Gastrocnemius medialis (tissue), 4 donors: ENCODE measurements at regions of chr9 and their contacts with region 1.

Region 1: GRCh38 chr9:81394881-81395675 is 294.3 kb downstream of the TLE1 start:
- DNase-seq: no peak
- ATAC-seq: peak in 1 of 2 donors; percentile 46
- H3K4me3 ChIP-seq: no peak overlapping the region
- H3K27ac ChIP-seq: peak overlapping the region; percentile 29 to 66 (median 60)
- H3K4me1 ChIP-seq: peaks cover 16 to 24% of the 10 kb centered on the region in 2 donors
- H3K27me3 ChIP-seq: no peaks in the 10 kb centered on the region
- CTCF ChIP-seq: no peak
- POLR2A ChIP-seq: no peak

Region 2: DNA sequence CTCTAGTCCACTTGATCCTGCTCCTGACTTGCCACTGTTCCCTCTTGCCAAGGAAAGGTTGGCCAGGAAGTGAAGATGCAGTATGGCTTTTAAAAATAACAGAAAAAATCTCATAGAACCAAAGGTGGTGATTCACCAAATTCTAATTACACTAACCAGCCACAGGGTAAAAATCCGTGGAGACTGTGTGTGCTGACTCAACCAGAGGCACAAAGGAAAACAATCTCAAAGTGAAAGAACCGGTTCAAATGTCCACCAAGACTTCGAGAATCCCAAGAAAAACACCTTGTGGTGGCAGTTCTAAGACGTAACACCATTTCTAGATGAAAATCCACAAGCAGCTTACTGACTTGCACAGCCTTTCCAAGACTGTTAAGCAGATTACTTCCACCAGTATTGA is 15.1 kb after region 1 on chr9:
- in situ Hi-C with region 1: no loop called
- intact Hi-C with region 1: loop called (anchors 2 kb)
- DNase-seq: no peak
- ATAC-seq: no peak
- H3K4me3 ChIP-seq: no peak overlapping the region
- H3K27ac ChIP-seq: no peak overlapping the region
- H3K4me1 ChIP-seq: peaks cover 6 to 11% of the 10 kb centered on the region in 2 donors
- H3K27me3 ChIP-seq: no peaks in the 10 kb centered on the region
- CTCF ChIP-seq: no peak
- POLR2A ChIP-seq: no peak

Region 3: GRCh38 chr9:82488313-82489200 is 1093.5 kb after region 1 on chr9:
- in situ Hi-C with region 1: no loop called
- intact Hi-C with region 1: loop called (anchors 5 kb)
- DNase-seq: peak; percentile 6 to 10
- ATAC-seq: peak; percentile 73 to 84
- H3K4me3 ChIP-seq: peak overlapping the region in 1 of 4 donors; percentile 12
- H3K27ac ChIP-seq: peak overlapping the region; percentile 53 to 80 (median 62)
- H3K4me1 ChIP-seq: peaks cover 23 to 30% of the 10 kb centered on the region in 2 donors
- H3K27me3 ChIP-seq: no peaks in the 10 kb centered on the region
- CTCF ChIP-seq: no peak
- POLR2A ChIP-seq: no peak